Ascending aorta (tissue), 2 donors: ENCODE measurements at regions of chr11 and their contacts with region 1.

Region 1: GRCh38 chr11:86068951-86069407 is at the start of gene PICALM:
- DNase-seq: peak; percentile 95 to 99
- H3K4me3 ChIP-seq: peak within 1 kb of the TSS; percentile 77 to 96
- H3K27ac ChIP-seq: peak within 1 kb of the TSS; percentile 95 to 99
- H3K4me1 ChIP-seq: peaks cover 5 to 22% of the 10 kb centered on the region in 2 donors
- H3K27me3 ChIP-seq: no peaks in the 10 kb centered on the region
- CTCF ChIP-seq: no peak
- total RNA-seq, gene PICALM: 158 TPM

Region 2: GRCh38 chr11:85947431-85948272 is 121.3 kb before region 1 on chr11:
- intact Hi-C with region 1: loop called (anchors 2 kb)
- DNase-seq: peak in 1 of 2 donors; percentile 76
- H3K4me3 ChIP-seq: no peak overlapping the region
- H3K27ac ChIP-seq: peak overlapping the region; percentile 48 to 73
- H3K4me1 ChIP-seq: peaks cover 0 to 21% of the 10 kb centered on the region in 2 donors
- H3K27me3 ChIP-seq: no peaks in the 10 kb centered on the region
- CTCF ChIP-seq: no peak

Region 3: GRCh38 chr11:86081455-86081854 is 12.5 kb after region 1 on chr11:
- intact Hi-C with region 1: no loop called
- DNase-seq: no peak
- H3K4me3 ChIP-seq: no peak overlapping the region
- H3K27ac ChIP-seq: no peak overlapping the region
- H3K4me1 ChIP-seq: no peaks in the 10 kb centered on the region
- H3K27me3 ChIP-seq: no peaks in the 10 kb centered on the region
- CTCF ChIP-seq: no peak

Region 4: GRCh38 chr11:86091566-86091965 is 22.6 kb after region 1 on chr11:
- intact Hi-C with region 1: loop called (anchors 1 kb)
- DNase-seq: peak; percentile 14 to 87
- H3K4me3 ChIP-seq: no peak overlapping the region
- H3K27ac ChIP-seq: peak overlapping the region; percentile 76 to 77
- H3K4me1 ChIP-seq: peaks cover 0 to 12% of the 10 kb centered on the region in 2 donors
- H3K27me3 ChIP-seq: no peaks in the 10 kb centered on the region
- CTCF ChIP-seq: no peak

Region 5: GRCh38 chr11:86174101-86175046 is 105.4 kb after region 1 on chr11:
- intact Hi-C with region 1: loop called (anchors 1 kb)
- DNase-seq: peak; percentile 73 to 97
- H3K4me3 ChIP-seq: no peak overlapping the region
- H3K27ac ChIP-seq: peak overlapping the region; percentile 72 to 88
- H3K4me1 ChIP-seq: peaks cover 9 to 16% of the 10 kb centered on the region in 2 donors
- H3K27me3 ChIP-seq: no peaks in the 10 kb centered on the region
- CTCF ChIP-seq: no peak

Region 6: GRCh38 chr11:86218125-86219084 is 149.4 kb after region 1 on chr11:
- intact Hi-C with region 1: loop called (anchors 1 kb)
- DNase-seq: peak in 1 of 2 donors; percentile 77
- H3K4me3 ChIP-seq: peak overlapping the region; percentile 37 to 53
- H3K27ac ChIP-seq: peak overlapping the region; percentile 35 to 39
- H3K4me1 ChIP-seq: peaks cover 0 to 10% of the 10 kb centered on the region in 2 donors
- H3K27me3 ChIP-seq: no peaks in the 10 kb centered on the region
- CTCF ChIP-seq: peak; percentile 76 to 91 (median 91)

Region 7: GRCh38 chr11:86802601-86803051 is 733.6 kb after region 1 on chr11:
- intact Hi-C with region 1: loop called (anchors 10 kb)
- DNase-seq: no peak
- H3K4me3 ChIP-seq: peak overlapping the region in 1 of 2 donors; percentile 67
- H3K27ac ChIP-seq: peak overlapping the region; percentile 67 to 76
- H3K4me1 ChIP-seq: peaks cover 0 to 16% of the 10 kb centered on the region in 2 donors
- H3K27me3 ChIP-seq: no peaks in the 10 kb centered on the region
- CTCF ChIP-seq: peak in 2 of 3 experiments; percentile 33 to 57